ENCODE measurements at regions of chr15 and their contacts with region 1.

Region 1: DNA sequence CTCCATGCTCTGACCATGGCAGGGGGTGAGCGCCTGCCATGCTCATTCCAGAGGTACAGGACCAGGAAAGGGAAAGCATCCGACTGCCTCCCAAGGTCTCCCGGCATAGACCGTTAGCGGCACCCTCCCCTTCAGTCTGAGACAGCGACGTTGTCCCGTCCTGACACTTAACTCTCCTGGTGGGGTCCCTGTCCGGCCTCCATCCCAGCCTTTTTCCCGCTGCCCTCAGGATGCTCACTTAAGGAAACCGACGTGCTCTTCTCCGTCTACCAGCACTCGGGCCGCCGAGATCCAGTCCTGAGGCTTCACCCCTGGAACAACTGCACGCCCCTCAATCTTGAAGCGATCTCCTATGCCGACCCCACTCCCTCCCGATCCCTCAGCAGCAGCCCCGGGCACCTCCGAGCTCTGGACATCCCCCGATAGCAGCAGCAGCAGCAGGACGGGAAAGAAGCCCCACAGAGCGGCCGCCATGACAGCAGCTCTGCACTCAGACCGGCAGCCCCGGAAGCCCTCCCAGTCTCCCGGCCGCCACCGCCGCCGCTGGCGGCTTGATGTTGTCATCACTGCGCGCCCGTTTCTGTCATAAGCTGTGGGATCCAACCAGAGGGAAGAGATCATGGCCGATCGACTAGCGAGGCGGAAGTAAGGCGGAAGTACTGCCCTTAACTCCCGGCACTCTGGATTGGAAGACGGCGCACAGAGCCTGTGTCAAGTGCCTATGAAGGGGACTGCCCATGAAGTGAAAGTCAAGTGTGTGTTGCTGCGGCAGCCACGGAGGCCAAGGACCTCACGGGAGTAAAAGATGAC is at the starts of genes EMC7 and PGBD4:
- DNase-seq: peak; percentile 98
- H3K4me3 ChIP-seq: peak within 1 kb of the TSS; percentile 92
- H3K4me3 Mint-ChIP-seq: peak within 1 kb of the TSS; percentile 100
- H3K27ac Mint-ChIP-seq: peak within 1 kb of the TSS; percentile 99
- H3K4me1 ChIP-seq: peaks cover 5% of the 10 kb centered on the region; the same call in 1 of the 2 replicates
- H3K4me1 Mint-ChIP-seq: no peaks in the 10 kb centered on the region
- H3K27me3 ChIP-seq: no peaks in the 10 kb centered on the region
- H3K27me3 Mint-ChIP-seq: no peaks in the 10 kb centered on the region
- CTCF ChIP-seq: no peak
- total RNA-seq, gene EMC7: 70.2 and 74.2 TPM in 2 replicates
- total RNA-seq, gene PGBD4: 1.5 and 1.7 TPM in 2 replicates

Region 2: DNA sequence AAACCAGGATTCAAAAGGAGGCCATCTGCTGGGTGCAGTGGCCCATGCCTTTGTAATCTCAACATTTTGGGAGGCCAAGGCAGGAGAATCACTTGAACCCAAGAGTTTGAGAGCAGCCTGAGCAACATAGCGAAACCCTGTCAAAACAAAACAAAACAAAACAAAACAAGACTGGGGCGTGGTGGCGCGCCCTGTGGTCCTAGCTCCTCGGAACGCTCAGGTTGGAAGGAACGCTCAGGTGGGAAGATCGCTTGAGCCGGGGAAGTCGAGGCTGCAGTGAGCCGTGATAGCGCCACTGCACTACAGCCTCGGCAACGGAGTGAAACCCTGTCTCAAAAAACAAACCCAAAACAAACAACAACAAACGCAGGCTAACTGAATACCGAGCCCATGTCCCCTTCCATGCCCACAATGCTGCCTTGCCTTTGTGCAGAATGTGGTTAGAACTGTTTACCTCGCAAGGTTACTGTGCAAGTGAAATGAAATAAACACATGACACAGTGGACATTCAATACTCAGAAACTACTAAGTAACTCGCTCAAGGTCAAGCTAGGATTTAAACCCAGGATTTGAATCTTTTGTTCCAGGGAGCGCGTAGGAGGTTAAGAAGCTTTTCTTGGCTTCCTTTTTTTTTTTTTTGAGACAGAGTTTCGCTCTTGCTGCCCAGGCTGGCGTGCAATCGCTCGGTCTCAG is 122.5 kb after region 1 on chr15:
- CTCF ChIA-PET with region 1: no interaction called
- POLR2A ChIA-PET with region 1: no interaction called
- intact Hi-C with region 1: loop called (anchors 1 kb)
- DNase-seq: no peak
- H3K4me3 ChIP-seq: peak overlapping the region; percentile 81
- H3K4me3 Mint-ChIP-seq: peak overlapping the region; percentile 97
- H3K27ac Mint-ChIP-seq: peak overlapping the region; percentile 96
- H3K4me1 ChIP-seq: no peaks in the 10 kb centered on the region
- H3K4me1 Mint-ChIP-seq: no peaks in the 10 kb centered on the region
- H3K27me3 ChIP-seq: no peaks in the 10 kb centered on the region
- H3K27me3 Mint-ChIP-seq: no peaks in the 10 kb centered on the region
- CTCF ChIP-seq: no peak

Region 3: GRCh38 chr15:34259566-34259965 is 158.0 kb after region 1 on chr15:
- CTCF ChIA-PET with region 1: no interaction called
- POLR2A ChIA-PET with region 1: no interaction called
- intact Hi-C with region 1: no loop called
- DNase-seq: no peak
- H3K4me3 ChIP-seq: no peak overlapping the region
- H3K4me3 Mint-ChIP-seq: no peak overlapping the region
- H3K27ac Mint-ChIP-seq: no peak overlapping the region
- H3K4me1 ChIP-seq: peaks cover 8% of the 10 kb centered on the region
- H3K4me1 Mint-ChIP-seq: peaks cover 10% of the 10 kb centered on the region
- H3K27me3 ChIP-seq: no peaks in the 10 kb centered on the region
- H3K27me3 Mint-ChIP-seq: no peaks in the 10 kb centered on the region
- CTCF ChIP-seq: no peak